Activated T-helper 1 cell treated with anti-CD3 and anti-CD28 coated beads, Interleukin-12 subunit alpha, Interleukin-12 subunit beta, Interleukin-2, Interleukin-4 antibody, amounts not matched to agents 30 ng/mL and 10 ng/mL and 1 ng/mL, durations not matched to agents 14 hours and 24 hours and 36 hours (primary cell): ENCODE measurements at regions of chr17 and their contacts with region 1.

Region 1: DNA sequence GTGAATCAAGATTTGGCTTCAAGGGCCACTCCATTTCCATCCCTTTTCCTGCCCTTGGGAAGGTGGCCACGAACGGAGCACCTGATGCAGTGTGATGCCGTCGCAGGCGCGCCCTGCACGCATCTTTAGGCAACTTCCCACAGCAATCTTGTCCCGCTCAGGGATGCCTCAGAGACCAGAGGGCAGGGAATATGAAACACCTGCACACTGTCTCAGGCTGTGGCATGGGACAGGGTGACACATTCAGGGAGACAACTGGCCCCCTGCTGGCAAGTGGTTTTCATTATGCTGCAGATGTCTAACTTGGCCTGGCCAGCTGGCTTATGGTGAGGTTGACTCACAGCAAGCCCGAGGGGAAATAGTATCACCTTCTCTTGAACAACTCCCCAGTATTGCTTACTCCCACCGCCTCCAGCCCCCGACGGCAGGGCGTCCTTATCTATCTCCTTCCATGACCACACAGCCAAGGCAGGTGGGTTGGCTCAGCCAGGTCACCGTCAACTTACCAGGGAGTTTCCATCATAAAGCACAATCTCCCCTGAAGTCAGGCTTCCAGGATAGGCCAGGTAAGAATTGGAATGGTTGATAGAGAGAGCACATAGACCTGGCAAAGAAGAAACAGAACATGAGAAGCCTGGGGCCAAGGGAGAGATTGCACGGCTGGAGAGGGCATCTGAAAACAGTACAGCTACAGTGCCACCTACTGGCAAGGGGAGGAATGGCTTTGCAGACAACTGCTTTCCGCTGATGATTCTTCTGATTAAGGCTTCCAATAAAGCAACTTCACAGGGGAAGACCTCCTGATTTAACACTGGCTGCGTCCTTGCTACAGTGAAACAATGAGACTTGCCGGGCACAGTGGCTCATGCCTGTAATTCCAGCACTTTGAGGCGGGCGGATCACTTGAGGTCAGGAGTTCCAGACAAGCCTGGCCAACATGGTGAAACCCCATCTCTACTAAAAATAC is 21.1 kb downstream of the WIPI1 start:
- DNase-seq: peak; percentile 77
- H3K4me3 Mint-ChIP-seq: peak overlapping the region; percentile 64
- H3K27ac Mint-ChIP-seq: peak overlapping the region; percentile 91
- H3K4me1 Mint-ChIP-seq: peaks cover 64% of the 10 kb centered on the region
- H3K27me3 Mint-ChIP-seq: no peaks in the 10 kb centered on the region

Region 2: GRCh38 chr17:68172461-68172954 is 263.7 kb before region 1 on chr17:
- intact Hi-C with region 1: loop called (anchors 1 kb)
- DNase-seq: peak; percentile 61
- H3K4me3 Mint-ChIP-seq: no peak overlapping the region
- H3K27ac Mint-ChIP-seq: no peak overlapping the region
- H3K4me1 Mint-ChIP-seq: peaks cover 31% of the 10 kb centered on the region
- H3K27me3 Mint-ChIP-seq: peaks cover 6% of the 10 kb centered on the region

Region 3: DNA sequence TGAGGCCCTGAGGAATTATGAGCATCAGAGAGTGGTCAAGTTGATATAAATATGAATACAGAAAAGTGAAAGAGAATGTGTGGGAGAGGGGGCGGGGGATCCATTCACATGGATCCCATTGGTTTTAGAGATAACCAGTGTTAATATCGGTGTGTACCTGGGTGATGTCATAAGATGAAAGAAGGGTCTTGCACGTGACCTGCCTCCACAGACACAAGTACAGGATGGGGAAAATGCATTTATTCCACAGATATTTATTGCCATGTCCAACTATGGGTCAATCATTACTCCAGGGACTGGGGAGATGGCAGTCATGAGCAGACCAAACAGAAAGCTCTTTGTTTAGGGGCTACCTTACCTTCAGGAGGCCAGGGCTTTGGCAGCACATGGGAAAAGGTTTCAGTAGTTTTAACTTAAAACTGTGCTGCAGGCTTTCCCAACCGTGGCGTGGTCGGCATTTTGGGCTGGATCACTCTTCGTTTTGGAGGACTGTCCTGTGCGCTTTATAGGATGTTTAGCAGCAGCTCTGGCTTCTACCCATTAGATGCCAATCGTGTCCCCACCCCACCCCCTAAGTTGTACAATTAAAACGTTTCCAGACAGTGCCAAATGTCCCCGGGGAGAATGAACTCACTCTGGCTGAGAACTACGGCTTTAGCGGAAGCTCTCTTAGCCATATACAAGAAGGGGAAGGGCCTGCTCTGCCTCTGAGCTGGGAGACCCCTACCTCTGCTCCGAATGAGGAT is 48.2 kb before region 1 on chr17:
- intact Hi-C with region 1: no loop called
- DNase-seq: no peak
- H3K4me3 Mint-ChIP-seq: no peak overlapping the region
- H3K27ac Mint-ChIP-seq: no peak overlapping the region
- H3K4me1 Mint-ChIP-seq: peaks cover 26% of the 10 kb centered on the region
- H3K27me3 Mint-ChIP-seq: no peaks in the 10 kb centered on the region

Region 4: GRCh38 chr17:68398691-68399637 is 37.2 kb before region 1 on chr17:
- intact Hi-C with region 1: loop called (anchors 2 kb)
- DNase-seq: peak; percentile 9
- H3K4me3 Mint-ChIP-seq: peak overlapping the region; percentile 49
- H3K27ac Mint-ChIP-seq: peak overlapping the region; percentile 85
- H3K4me1 Mint-ChIP-seq: peaks cover 51% of the 10 kb centered on the region
- H3K27me3 Mint-ChIP-seq: no peaks in the 10 kb centered on the region